Activated CD4-positive, alpha-beta memory T cell treated with anti-CD3 and anti-CD28 coated beads for 36 hours (primary cell): ENCODE measurements at regions of chr17 and their contacts with region 1.

Region 1: GRCh38 chr17:49290690-49291359 is 60.2 kb upstream of the PHOSPHO1 start:
- DNase-seq: no peak
- H3K4me3 Mint-ChIP-seq: no peak overlapping the region
- H3K27ac Mint-ChIP-seq: no peak overlapping the region
- H3K4me1 Mint-ChIP-seq: peaks cover 15% of the 10 kb centered on the region
- H3K27me3 Mint-ChIP-seq: no peaks in the 10 kb centered on the region

Region 2: DNA sequence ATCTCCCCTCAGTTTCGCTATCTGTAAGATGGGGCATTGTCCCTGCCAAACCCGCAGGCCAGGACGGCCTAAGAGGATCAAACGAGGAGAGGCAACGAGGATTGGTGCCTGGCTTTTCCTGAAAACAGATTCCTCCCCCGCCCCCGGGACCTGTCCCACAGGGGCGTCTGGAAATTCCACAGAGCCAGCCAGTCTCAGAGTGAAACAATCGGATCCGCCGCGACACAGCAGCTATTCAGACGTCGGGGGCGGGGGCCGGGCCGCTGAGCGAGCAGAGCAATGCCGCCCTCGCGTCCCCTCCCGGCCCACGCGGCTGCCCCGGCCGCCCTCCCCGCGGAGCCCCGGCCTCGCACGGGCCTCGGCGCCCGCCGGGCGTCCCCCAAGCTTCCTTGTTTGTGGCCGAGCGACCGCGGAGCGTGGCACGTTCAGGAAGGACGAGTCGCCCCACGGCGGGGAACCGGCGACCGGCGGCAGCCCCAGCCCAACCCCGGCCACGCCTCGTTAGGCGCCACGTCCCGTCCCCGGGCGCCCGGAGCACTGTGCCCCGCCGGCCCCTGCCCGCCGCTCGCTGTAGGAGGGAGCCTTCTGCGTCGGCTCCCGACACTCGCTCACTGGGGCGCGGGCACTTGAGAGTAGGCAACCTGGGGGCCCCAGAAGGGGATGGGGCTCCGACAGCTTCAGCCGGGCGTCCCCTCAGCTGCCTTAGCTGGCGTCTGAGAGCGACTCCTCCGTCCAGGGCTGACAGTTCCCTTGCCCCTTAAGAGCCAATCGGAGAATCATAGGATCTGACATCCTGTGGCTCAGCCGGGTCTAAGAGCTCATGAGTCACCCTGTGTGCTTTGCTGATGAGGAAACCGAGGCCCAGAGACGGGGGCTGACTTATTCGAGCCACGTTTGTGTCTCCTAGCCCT is 30.6 kb before region 1 on chr17:
- CTCF ChIA-PET with region 1: interaction called, 11 read pairs
- POLR2A ChIA-PET with region 1: no interaction called
- intact Hi-C with region 1: no loop called
- DNase-seq: peak; percentile 68
- H3K4me3 Mint-ChIP-seq: peak overlapping the region; percentile 77
- H3K27ac Mint-ChIP-seq: no peak overlapping the region
- H3K4me1 Mint-ChIP-seq: peaks cover 9% of the 10 kb centered on the region
- H3K27me3 Mint-ChIP-seq: peaks cover 1% of the 10 kb centered on the region